ENCODE measurements at regions of chr3 and their contacts with region 1.

Region 1: DNA sequence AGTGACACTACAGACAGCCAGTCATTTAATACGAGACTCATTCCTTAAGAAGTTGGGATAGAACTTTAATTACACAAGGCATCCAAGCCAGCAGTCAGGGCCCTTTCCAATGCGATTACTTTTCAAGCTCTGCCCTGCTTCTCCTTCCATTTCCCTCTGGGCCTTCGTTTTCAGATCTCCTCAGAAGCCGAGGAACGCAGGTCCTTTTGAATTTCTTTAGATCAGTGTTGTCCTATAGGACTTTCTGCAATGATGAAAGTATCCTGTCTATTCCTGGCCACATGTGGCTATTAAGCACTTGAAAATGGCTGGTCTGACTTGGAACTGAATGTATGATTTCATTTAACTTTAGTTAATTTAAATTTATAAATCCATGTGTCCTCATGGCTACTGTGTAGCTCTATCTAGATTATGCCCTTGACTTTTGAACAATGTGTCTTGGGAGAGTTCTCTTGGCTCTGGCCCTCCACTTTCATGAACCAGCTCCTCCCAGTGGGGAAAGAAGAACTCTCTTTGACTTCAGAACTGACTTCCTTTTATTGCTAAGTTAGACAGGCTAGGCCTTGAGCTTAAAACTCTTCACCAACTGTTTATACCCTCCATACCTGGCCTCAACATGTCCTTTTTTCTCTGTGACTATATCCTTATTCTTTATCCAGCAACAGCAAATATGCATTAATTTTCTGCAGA is 22.6 kb downstream of the TGFBR2 start:
- DNase-seq: no peak
- H3K4me3 ChIP-seq: peak overlapping the region; percentile 22
- H3K4me3 Mint-ChIP-seq: peak overlapping the region; percentile 16 to 74 (median 61)
- H3K27ac ChIP-seq: no peak overlapping the region
- H3K27ac Mint-ChIP-seq: peak overlapping the region; percentile 78 to 99 (median 93)
- H3K4me1 ChIP-seq: peaks cover 97% of the 10 kb centered on the region
- H3K4me1 Mint-ChIP-seq: peaks cover 89 to 99% (median 98%) of the 10 kb centered on the region in 3 donors
- H3K27me3 ChIP-seq: no peaks in the 10 kb centered on the region
- H3K27me3 Mint-ChIP-seq: no peaks in the 10 kb centered on the region

Region 2: GRCh38 chr3:29537889-29538609 is 1091.0 kb before region 1 on chr3:
- CTCF ChIA-PET with region 1: no interaction called
- POLR2A ChIA-PET with region 1: no interaction called
- DNase-seq: no peak
- H3K4me3 ChIP-seq: no peak overlapping the region
- H3K4me3 Mint-ChIP-seq: no peak overlapping the region
- H3K27ac ChIP-seq: no peak overlapping the region
- H3K27ac Mint-ChIP-seq: no peak overlapping the region
- H3K4me1 ChIP-seq: no peaks in the 10 kb centered on the region
- H3K4me1 Mint-ChIP-seq: no peaks in the 10 kb centered on the region
- H3K27me3 ChIP-seq: no peaks in the 10 kb centered on the region
- H3K27me3 Mint-ChIP-seq: no peaks in the 10 kb centered on the region

Region 3: GRCh38 chr3:30606301-30607031 is 22.6 kb before region 1 on chr3 and contains the start of gene TGFBR2:
- CTCF ChIA-PET with region 1: interaction called, 30 read pairs
- POLR2A ChIA-PET with region 1: interaction called, 9 read pairs
- DNase-seq: peak; percentile 71 to 87 (median 76)
- H3K4me3 ChIP-seq: peak within 1 kb of the TSS; percentile 98
- H3K4me3 Mint-ChIP-seq: peak within 1 kb of the TSS; percentile 92 to 99 (median 98)
- H3K27ac ChIP-seq: peak within 1 kb of the TSS; percentile 78
- H3K27ac Mint-ChIP-seq: peak within 1 kb of the TSS; percentile 85 to 99 (median 98)
- H3K4me1 ChIP-seq: peaks cover 55% of the 10 kb centered on the region
- H3K4me1 Mint-ChIP-seq: peaks cover 59 to 66% (median 60%) of the 10 kb centered on the region in 3 donors
- H3K27me3 ChIP-seq: no peaks in the 10 kb centered on the region
- H3K27me3 Mint-ChIP-seq: no peaks in the 10 kb centered on the region
- total RNA-seq, gene TGFBR2: 55.3 to 56.3 TPM

Region 4: DNA sequence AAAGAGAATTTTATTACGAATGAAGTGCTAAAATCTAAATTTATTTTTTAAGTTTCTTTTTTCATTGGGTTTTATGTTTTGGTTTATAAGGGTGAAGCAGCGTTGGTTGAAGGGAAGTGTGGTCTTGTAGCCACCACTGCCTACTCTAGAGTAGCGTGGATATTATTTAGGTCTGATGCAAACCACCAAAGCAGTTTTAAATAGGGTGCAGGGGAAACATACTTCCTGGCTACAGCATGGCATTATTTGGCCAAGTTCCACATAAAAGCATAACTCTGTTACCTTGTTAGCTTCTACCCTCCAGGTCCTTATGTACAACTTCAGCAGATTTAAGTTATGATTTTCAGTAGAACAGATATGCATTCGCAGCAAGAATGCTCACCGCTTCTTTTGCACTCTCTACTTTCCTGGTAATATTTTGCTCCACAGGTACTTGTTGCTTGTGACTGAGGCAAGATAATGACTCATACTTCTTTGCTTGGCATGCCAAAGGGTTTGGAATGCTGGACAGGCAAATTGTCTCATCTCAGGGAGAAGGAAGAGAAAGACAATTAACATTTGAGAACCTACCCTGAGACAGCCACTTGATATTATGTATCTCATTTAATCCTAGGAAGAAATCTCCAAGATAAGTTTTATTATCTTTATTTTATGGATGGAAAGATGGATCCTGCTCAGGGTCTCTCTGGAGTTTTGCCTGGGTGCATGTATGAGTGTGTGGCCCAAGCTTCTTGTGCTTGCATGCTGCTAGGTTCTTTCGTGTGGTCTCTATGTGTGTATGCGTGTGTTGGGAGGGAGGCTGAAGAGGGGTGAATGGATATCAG is 17.2 kb before region 1 on chr3:
- CTCF ChIA-PET with region 1: interaction called, 30 read pairs
- POLR2A ChIA-PET with region 1: interaction called, 9 read pairs
- DNase-seq: peak in 1 of 5 donors; percentile 43
- H3K4me3 ChIP-seq: peak overlapping the region; percentile 81
- H3K4me3 Mint-ChIP-seq: peak overlapping the region; percentile 92 to 97 (median 97)
- H3K27ac ChIP-seq: peak overlapping the region; percentile 22
- H3K27ac Mint-ChIP-seq: peak overlapping the region; percentile 85 to 99 (median 90)
- H3K4me1 ChIP-seq: peaks cover 69% of the 10 kb centered on the region
- H3K4me1 Mint-ChIP-seq: peaks cover 72 to 82% (median 77%) of the 10 kb centered on the region in 3 donors
- H3K27me3 ChIP-seq: no peaks in the 10 kb centered on the region
- H3K27me3 Mint-ChIP-seq: no peaks in the 10 kb centered on the region

Region 5: DNA sequence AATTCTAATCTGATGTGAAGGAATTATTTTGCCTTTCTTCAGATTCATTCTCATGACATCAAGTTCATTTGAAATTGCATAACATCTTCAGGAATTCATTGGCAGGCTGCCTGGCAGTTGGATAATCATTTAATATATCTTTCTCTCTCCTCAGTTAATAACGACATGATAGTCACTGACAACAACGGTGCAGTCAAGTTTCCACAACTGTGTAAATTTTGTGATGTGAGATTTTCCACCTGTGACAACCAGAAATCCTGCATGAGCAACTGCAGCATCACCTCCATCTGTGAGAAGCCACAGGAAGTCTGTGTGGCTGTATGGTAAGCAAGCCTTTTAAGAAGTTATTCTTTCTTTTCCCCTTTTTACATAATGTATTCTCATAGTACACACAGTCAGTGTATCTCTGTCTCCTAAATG is 15.6 kb after region 1 on chr3:
- CTCF ChIA-PET with region 1: interaction called, 15 read pairs
- POLR2A ChIA-PET with region 1: interaction called, 11 read pairs
- DNase-seq: peak; percentile 34 to 78 (median 68)
- H3K4me3 ChIP-seq: peak overlapping the region; percentile 9
- H3K4me3 Mint-ChIP-seq: peak overlapping the region; percentile 56 to 80 (median 66)
- H3K27ac ChIP-seq: peak overlapping the region; percentile 38
- H3K27ac Mint-ChIP-seq: peak overlapping the region; percentile 83 to 98 (median 90)
- H3K4me1 ChIP-seq: peaks cover 98% of the 10 kb centered on the region
- H3K4me1 Mint-ChIP-seq: peaks cover 89 to 100% (median 98%) of the 10 kb centered on the region in 3 donors
- H3K27me3 ChIP-seq: no peaks in the 10 kb centered on the region
- H3K27me3 Mint-ChIP-seq: no peaks in the 10 kb centered on the region

Region 6: GRCh38 chr3:31265646-31266428 is 636.8 kb after region 1 on chr3:
- CTCF ChIA-PET with region 1: no interaction called
- POLR2A ChIA-PET with region 1: no interaction called
- DNase-seq: no peak
- H3K4me3 ChIP-seq: no peak overlapping the region
- H3K4me3 Mint-ChIP-seq: no peak overlapping the region
- H3K27ac ChIP-seq: no peak overlapping the region
- H3K27ac Mint-ChIP-seq: peak overlapping the region in 1 of 8 donors; percentile 5
- H3K4me1 ChIP-seq: no peaks in the 10 kb centered on the region
- H3K4me1 Mint-ChIP-seq: peaks cover 4 to 12% (median 4%) of the 10 kb centered on the region in 3 donors
- H3K27me3 ChIP-seq: no peaks in the 10 kb centered on the region
- H3K27me3 Mint-ChIP-seq: no peaks in the 10 kb centered on the region